ENCODE measurements at regions of chr4 and their contacts with region 1.

Region 1: DNA sequence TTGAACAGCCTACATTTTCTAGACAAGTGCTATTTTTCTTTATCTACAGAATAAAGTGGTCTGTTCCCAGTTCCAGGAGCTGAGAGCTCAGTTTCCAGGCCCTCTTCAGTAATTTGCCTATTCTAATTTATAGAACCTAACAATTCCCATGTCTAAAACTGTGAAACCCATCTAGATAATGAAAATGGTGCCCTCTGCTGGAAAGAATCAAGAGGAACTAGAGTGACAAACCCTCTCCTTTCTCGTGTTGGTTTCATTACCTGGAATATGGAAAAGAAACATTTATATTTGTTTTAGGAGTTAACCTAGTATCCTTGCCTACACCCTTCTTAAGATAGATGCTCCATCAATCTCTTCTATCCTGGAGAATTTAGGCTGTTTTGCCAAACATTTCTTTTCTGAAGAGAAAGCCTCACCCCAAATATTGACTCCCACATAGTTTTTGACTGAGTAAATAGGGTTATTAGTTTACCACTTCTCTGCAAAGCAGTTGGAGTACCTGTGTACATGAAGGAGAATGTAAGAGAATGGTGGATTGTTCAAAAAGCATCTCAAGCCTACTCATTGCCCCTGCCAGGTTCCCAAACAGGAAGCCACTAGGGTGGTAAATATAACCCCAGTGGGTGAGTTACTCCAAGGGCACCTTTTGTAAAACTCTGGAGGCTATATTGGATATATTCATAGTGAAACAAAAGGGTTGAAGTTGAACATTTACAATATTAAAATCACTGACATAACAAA is 121.6 kb downstream of the RASL11B start:
- DNase-seq: peak; percentile 38
- CTCF ChIP-seq: peak; percentile 48

Region 2: GRCh38 chr4:52376132-52376704 is 607.5 kb before region 1 on chr4:
- CTCF ChIA-PET with region 1: interaction called, 20 read pairs
- POLR2A ChIA-PET with region 1: no interaction called
- DNase-seq: peak; percentile 24
- CTCF ChIP-seq: peak; percentile 37

Region 3: DNA sequence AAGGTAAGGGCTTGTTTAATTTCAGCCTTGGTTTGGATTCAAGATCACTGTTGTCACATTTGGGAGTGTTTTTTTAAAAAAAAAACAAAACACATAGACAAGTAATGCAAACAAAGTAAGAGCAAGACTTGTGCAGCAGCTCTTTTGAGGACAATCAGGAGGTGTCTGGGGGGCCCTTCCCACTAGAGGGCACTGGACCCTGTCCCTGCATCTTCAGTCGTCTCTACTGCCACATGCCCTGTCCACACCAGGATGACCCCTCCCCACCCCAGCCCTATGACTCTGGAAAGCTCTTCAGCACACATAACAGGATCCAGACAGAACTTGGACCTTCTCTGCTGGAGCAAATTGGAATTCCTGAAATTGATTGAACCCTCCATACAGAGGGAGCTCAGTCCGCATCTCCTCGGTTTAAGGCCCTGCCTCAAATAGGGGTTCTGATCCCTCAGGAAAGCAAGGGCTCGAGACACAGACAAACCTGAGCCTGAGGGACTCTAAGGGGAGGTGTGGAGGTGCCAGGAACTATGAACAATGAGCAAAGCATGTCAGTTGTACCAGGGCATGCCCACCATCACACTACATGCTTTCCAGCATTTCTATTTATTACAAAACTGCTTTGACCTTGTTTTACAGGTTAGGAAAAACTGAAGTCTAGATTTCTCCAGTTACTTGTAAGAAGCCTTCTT is 395.5 kb before region 1 on chr4:
- CTCF ChIA-PET with region 1: interaction called, 16 read pairs
- POLR2A ChIA-PET with region 1: no interaction called
- DNase-seq: peak; percentile 43
- CTCF ChIP-seq: peak; percentile 46

Region 4: GRCh38 chr4:52961666-52962412 is 21.9 kb before region 1 on chr4:
- CTCF ChIA-PET with region 1: interaction called, 14 read pairs
- POLR2A ChIA-PET with region 1: no interaction called
- DNase-seq: no peak
- CTCF ChIP-seq: no peak

Measured in GM10248 (cell line).